Heart left ventricle (tissue), 16 donors: ENCODE measurements at regions of chr13 and their contacts with region 1.

Region 1: GRCh38 chr13:94549232-94550061 is 46.5 kb downstream of the TGDS start:
- DNase-seq: peak; percentile 89 to 96 (median 93)
- ATAC-seq: peak; percentile 92 to 98 (median 96)
- H3K4me3 ChIP-seq: peak overlapping the region; percentile 55 to 91 (median 78)
- H3K27ac ChIP-seq: peak overlapping the region; percentile 75 to 98 (median 94)
- H3K4me1 ChIP-seq: peaks cover 0 to 15% (median 7%) of the 10 kb centered on the region in 12 donors
- H3K27me3 ChIP-seq: no peaks in the 10 kb centered on the region
- CTCF ChIP-seq: peak in 1 of 12 donors; percentile 2
- POLR2A ChIP-seq: no peak

Region 2: DNA sequence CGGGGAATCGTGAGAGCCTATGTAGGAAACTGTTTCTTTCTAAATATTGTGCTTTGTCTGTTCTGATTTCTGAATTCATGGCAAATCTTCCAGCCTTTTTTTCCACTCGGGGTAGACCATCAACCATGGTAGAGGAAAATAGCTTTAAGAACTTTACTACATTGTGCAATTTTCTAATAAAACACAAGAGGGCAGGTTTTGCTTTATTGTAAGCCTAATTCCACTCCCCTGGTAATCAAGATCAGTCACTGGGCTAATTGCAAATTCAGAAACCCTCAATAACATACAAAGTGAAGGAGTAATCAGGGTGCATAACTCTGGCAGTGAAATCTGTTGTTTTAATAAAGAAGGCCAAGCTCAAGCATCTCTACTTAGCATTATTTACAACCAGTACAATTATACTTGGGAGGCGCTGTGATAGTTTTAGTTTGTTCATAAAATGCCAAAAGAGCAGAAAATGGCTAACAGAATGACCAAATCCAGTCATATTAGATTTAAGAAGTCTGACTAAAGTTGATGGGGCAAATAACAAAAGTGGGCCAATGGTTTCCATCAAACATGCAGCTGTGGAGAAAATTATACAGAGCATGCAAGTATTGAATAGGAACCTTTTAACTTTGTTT is 113.7 kb before region 1 on chr13:
- intact Hi-C with region 1: loop called in 1 of 10 experiments (anchors 10 kb)
- DNase-seq: no peak
- ATAC-seq: peak in 3 of 4 donors; percentile 50 to 71 (median 67)
- H3K4me3 ChIP-seq: no peak overlapping the region
- H3K27ac ChIP-seq: no peak overlapping the region
- H3K4me1 ChIP-seq: peaks cover 0 to 8% (median 0%) of the 10 kb centered on the region in 12 donors
- H3K27me3 ChIP-seq: peaks cover 0 to 3% (median 0%) of the 10 kb centered on the region in 9 donors
- CTCF ChIP-seq: peak; percentile 44 to 69 (median 61)
- POLR2A ChIP-seq: no peak

Region 3: GRCh38 chr13:94595950-94596574 is 46.6 kb after region 1 on chr13 and contains the start of gene TGDS:
- intact Hi-C with region 1: loop called in 8 of 10 experiments (anchors 1 to 10 kb)
- DNase-seq: peak; percentile 91 to 95 (median 93)
- ATAC-seq: peak; percentile 97 to 100 (median 100)
- H3K4me3 ChIP-seq: peak within 1 kb of the TSS; percentile 45 to 98 (median 81)
- H3K27ac ChIP-seq: peak within 1 kb of the TSS in 11 of 12 donors; percentile 45 to 90 (median 78)
- H3K4me1 ChIP-seq: peaks cover 0 to 28% (median 14%) of the 10 kb centered on the region in 12 donors
- H3K27me3 ChIP-seq: no peaks in the 10 kb centered on the region
- CTCF ChIP-seq: peak in 7 of 12 donors; percentile 10 to 34 (median 16)
- POLR2A ChIP-seq: peak; percentile 7 to 85
- total RNA-seq, gene TGDS: 3.2 to 6.7 (median 5.3) TPM

Region 4: DNA sequence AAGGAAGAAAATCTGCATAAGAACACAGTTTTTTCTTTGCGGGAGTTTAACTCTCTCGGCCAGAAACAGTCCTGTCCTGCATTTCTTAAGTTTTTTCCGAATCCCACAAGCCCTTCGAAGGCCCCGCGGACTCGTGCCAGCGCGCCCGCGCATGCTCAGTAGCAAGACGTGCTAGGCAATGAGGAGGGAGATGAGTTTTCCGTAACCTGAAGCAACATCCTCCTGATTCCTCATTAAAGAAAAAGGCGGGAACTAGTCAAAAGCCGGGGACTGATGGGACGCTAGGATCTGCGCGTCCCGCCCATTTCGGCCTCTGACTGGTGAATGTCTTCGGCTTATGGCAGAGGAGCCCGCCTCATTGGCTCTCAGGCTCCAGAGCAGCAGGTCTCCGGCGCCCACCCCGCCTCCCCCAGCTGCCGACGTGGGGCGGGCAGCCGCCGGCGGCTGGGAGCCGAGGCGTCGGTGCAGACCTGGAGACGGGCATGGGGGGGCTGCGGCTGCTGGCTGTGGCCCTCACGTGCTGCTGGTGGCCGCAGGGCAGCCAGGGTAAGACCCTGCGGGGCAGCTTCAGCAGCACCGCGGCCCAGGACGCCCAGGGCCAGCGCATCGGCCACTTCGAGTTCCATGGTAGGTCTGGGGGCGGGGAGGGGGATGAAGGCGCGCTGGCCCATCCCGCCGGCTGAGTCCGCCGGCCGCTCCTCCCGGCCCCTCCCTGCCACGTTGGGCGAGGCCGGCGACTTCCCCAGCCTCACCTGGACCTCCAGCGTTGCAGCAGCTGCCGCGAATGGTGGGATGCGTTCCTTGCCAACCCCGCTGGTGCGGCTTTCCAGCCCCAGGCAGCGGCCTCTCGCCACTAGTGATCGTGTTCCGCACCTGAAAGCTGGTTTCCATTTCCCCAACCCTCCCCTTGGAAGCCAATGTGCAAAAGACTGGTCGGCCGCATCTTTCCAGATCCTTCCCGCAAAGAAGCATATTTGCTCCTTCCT is 52.3 kb after region 1 on chr13 and contains the start of gene GPR180:
- intact Hi-C with region 1: loop called in 8 of 10 experiments (anchors 1 to 10 kb)
- DNase-seq: peak; percentile 94 to 99 (median 95)
- ATAC-seq: peak; percentile 98 to 100 (median 100)
- H3K4me3 ChIP-seq: peak within 1 kb of the TSS; percentile 65 to 99 (median 84)
- H3K27ac ChIP-seq: peak within 1 kb of the TSS; percentile 47 to 91 (median 78)
- H3K4me1 ChIP-seq: peaks cover 0 to 15% (median 5%) of the 10 kb centered on the region in 12 donors
- H3K27me3 ChIP-seq: no peaks in the 10 kb centered on the region
- CTCF ChIP-seq: peak in 1 of 12 donors; percentile 19
- POLR2A ChIP-seq: peak in 1 of 2 donors; percentile 89
- total RNA-seq, gene GPR180: 2.1 to 6.4 (median 3.8) TPM

Region 5: GRCh38 chr13:94620286-94620896 is 70.9 kb after region 1 on chr13:
- intact Hi-C with region 1: loop called in 1 of 10 experiments (anchors 2 kb)
- DNase-seq: no peak
- ATAC-seq: no peak
- H3K4me3 ChIP-seq: no peak overlapping the region
- H3K27ac ChIP-seq: no peak overlapping the region
- H3K4me1 ChIP-seq: peaks cover 0 to 5% (median 0%) of the 10 kb centered on the region in 12 donors
- H3K27me3 ChIP-seq: no peaks in the 10 kb centered on the region
- CTCF ChIP-seq: peak in 11 of 12 donors; percentile 11 to 53 (median 41)
- POLR2A ChIP-seq: no peak

Region 6: DNA sequence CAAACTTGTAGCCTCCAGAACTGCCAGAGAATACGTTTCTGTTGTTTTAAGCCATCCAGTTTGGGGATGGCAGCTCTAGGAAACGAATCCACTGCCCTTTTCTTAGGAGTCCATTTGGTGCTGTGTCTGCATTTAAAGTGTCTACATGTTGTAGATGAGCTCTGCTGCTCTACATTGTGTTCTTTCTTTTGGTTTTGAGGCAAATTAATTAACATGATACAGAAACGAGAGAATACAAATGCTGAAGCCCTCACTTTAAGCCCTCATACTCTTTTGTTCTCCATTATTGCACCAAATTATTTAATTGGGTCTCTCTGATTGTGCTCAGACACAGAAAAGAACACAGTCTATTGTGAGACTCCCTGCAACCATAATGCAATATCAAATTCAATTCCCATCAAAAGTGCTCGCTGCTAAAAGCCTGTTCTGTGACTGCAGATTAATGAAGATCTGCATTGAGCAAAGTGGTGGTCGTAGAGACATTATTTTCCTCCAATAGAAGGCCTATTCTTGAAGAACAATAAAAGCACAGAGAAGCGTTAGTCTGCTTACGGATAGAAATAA is 329.2 kb after region 1 on chr13:
- intact Hi-C with region 1: no loop called
- DNase-seq: no peak
- ATAC-seq: no peak
- H3K4me3 ChIP-seq: no peak overlapping the region
- H3K27ac ChIP-seq: no peak overlapping the region
- H3K4me1 ChIP-seq: no peaks in the 10 kb centered on the region
- H3K27me3 ChIP-seq: no peaks in the 10 kb centered on the region
- CTCF ChIP-seq: no peak
- POLR2A ChIP-seq: no peak